Gastrocnemius medialis (tissue), 4 donors: ENCODE measurements at regions of chrX and their contacts with region 1.

Region 1: GRCh38 chrX:16870095-16870860 is at the start of gene RBBP7:
- DNase-seq: peak; percentile 85 to 89
- ATAC-seq: peak; percentile 83
- H3K4me3 ChIP-seq: peak within 1 kb of the TSS; percentile 64 to 84 (median 70)
- H3K27ac ChIP-seq: peak within 1 kb of the TSS; percentile 90 to 98 (median 95)
- H3K4me1 ChIP-seq: peaks cover 11 to 17% of the 10 kb centered on the region in 2 donors
- H3K27me3 ChIP-seq: peaks cover 0 to 8% (median 6%) of the 10 kb centered on the region in 3 donors
- CTCF ChIP-seq: no peak
- POLR2A ChIP-seq: peak; percentile 88 to 93
- total RNA-seq, gene RBBP7: 95.0 to 325 (median 151) TPM

Region 2: GRCh38 chrX:16786139-16786790 is 84.0 kb before region 1 on chrX and contains the start of gene TXLNG:
- in situ Hi-C with region 1: no loop called
- intact Hi-C with region 1: loop called (anchors 1 kb)
- DNase-seq: peak; percentile 97 to 98
- ATAC-seq: peak; percentile 97 to 99
- H3K4me3 ChIP-seq: peak within 1 kb of the TSS; percentile 68 to 84 (median 74)
- H3K27ac ChIP-seq: peak within 1 kb of the TSS; percentile 91 to 93 (median 92)
- H3K4me1 ChIP-seq: peaks cover 3 to 7% of the 10 kb centered on the region in 2 donors
- H3K27me3 ChIP-seq: no peaks in the 10 kb centered on the region
- CTCF ChIP-seq: no peak
- POLR2A ChIP-seq: peak; percentile 87 to 92
- total RNA-seq, gene TXLNG: 6.9 to 16.9 (median 9.6) TPM

Region 3: DNA sequence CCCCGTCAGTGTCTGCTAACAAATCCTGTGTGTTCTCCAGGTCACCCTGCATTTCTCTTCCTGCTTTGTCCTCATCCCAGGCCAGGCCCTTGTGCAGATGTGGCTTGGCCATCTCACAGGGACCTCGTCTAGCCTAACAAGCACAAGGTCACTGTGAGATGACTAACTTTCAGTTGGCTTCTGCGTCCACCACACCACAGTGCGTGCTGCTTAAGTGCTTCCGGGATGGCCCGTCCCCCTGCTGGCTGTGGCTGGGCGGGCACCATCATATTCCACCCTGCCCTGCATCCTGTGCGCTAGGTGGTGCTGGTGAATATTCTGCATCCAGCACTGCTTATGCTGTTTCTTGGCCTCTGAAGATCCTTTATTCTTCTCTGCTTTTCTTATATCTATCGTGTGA is 33.9 kb before region 1 on chrX:
- in situ Hi-C with region 1: no loop called
- intact Hi-C with region 1: loop called (anchors 1 kb)
- DNase-seq: peak in 1 of 2 donors; percentile 42
- ATAC-seq: no peak
- H3K4me3 ChIP-seq: no peak overlapping the region
- H3K27ac ChIP-seq: peak overlapping the region; percentile 71 to 82 (median 75)
- H3K4me1 ChIP-seq: peaks cover 8 to 16% of the 10 kb centered on the region in 2 donors
- H3K27me3 ChIP-seq: no peaks in the 10 kb centered on the region
- CTCF ChIP-seq: peak in 1 of 5 experiments; percentile 36
- POLR2A ChIP-seq: no peak